ENCODE measurements at regions of chr21 and their contacts with region 1.

Region 1: DNA sequence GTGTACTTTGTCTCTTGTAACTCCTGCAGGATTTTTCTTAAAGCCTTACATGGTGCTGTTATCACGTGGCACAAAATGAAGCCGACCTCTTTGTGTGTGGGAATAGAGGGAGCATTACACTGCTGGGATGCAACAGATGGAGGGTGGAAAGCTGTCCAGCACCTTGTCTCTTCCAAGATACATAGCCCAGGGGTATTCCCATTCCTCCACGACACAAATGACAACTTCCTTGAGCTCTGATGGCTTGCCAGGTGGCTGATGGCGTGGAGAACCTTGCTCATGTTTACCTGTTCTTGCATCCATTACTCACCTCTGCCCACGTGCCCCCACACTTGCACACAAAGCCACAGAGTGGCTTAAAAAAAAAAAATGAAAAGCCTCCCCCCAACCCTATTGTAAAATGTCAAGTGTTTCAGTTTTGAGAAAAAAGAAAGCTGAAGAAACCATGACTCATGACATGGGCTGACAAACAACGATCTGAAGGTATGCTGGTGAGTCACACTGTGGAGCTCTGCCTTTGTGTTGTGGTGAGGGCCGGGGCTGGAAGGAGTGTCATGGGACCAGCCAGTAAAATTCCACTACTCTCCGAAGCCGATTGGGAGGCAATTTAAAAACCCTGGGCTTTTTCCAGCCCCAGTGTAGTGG is 32.0 kb upstream of the ATP5PO start:
- DNase-seq: peak; percentile 68 to 97 (median 80)
- ATAC-seq: peak; percentile 59
- H3K4me3 ChIP-seq: peak overlapping the region; percentile 36
- H3K4me3 Mint-ChIP-seq: peak overlapping the region; percentile 65
- H3K27ac ChIP-seq: peak overlapping the region; percentile 93 to 98
- H3K27ac Mint-ChIP-seq: peak overlapping the region; percentile 93
- H3K4me1 ChIP-seq: peaks cover 76% of the 10 kb centered on the region
- H3K4me1 Mint-ChIP-seq: peaks cover 75% of the 10 kb centered on the region
- H3K27me3 ChIP-seq: no peaks in the 10 kb centered on the region
- H3K27me3 Mint-ChIP-seq: no peaks in the 10 kb centered on the region
- CTCF ChIP-seq: no peak

Region 2: GRCh38 chr21:33894736-33895288 is 52.8 kb before region 1 on chr21:
- CTCF ChIA-PET with region 1: no interaction called
- POLR2A ChIA-PET with region 1: no interaction called
- intact Hi-C with region 1: no loop called
- DNase-seq: peak; percentile 27 to 76 (median 54)
- ATAC-seq: peak; percentile 100
- H3K4me3 ChIP-seq: peak overlapping the region; percentile 13
- H3K4me3 Mint-ChIP-seq: peak overlapping the region; percentile 82
- H3K27ac ChIP-seq: no peak overlapping the region
- H3K27ac Mint-ChIP-seq: peak overlapping the region; percentile 76
- H3K4me1 ChIP-seq: peaks cover 7% of the 10 kb centered on the region
- H3K4me1 Mint-ChIP-seq: peaks cover 11% of the 10 kb centered on the region
- H3K27me3 ChIP-seq: no peaks in the 10 kb centered on the region
- H3K27me3 Mint-ChIP-seq: no peaks in the 10 kb centered on the region
- CTCF ChIP-seq: peak; percentile 54

Region 3: DNA sequence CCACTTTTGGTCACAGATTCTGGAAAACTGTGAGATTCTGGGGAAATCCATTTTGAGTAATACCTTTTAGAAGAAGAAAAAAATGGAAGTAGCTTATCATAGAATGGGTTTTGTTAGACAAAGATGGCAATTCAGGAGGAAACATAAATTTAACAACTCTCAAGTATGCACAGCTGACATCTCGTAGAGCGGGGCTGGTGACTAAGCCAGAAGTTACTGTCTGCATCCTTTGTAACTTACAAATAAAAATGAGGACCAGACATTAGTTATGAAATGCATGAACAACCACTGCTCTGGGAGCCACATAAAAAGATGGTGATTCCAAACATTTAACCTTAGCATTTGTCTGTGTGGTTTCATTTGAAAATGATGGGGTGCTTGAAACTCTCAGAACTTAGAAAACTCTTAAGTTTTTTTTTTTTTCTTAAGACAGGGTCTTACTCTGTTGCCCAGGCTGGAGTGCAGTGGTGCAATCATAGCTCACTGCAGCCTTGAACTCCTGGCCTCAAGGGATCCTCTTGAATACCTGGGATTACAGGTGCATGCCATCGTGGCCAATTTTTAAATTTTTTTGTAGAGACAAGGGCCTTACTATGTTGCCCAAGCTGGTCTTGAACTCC is 17.2 kb after region 1 on chr21:
- CTCF ChIA-PET with region 1: interaction called, 3 read pairs
- POLR2A ChIA-PET with region 1: interaction called, 32 read pairs
- intact Hi-C with region 1: loop called in 1 of 2 experiments (anchors 2 kb)
- DNase-seq: no peak
- ATAC-seq: no peak
- H3K4me3 ChIP-seq: no peak overlapping the region
- H3K4me3 Mint-ChIP-seq: no peak overlapping the region
- H3K27ac ChIP-seq: no peak overlapping the region
- H3K27ac Mint-ChIP-seq: no peak overlapping the region
- H3K4me1 ChIP-seq: peaks cover 6% of the 10 kb centered on the region
- H3K4me1 Mint-ChIP-seq: peaks cover 33% of the 10 kb centered on the region
- H3K27me3 ChIP-seq: no peaks in the 10 kb centered on the region
- H3K27me3 Mint-ChIP-seq: no peaks in the 10 kb centered on the region
- CTCF ChIP-seq: no peak

Region 4: GRCh38 chr21:33998402-33998801 is 50.8 kb after region 1 on chr21:
- CTCF ChIA-PET with region 1: interaction called, 3 read pairs
- POLR2A ChIA-PET with region 1: interaction called, 3 read pairs
- intact Hi-C with region 1: loop called in 1 of 2 experiments (anchors 5 kb)
- DNase-seq: peak in 4 of 14 experiments; percentile 26 to 48 (median 32)
- ATAC-seq: peak; percentile 64
- H3K4me3 ChIP-seq: no peak overlapping the region
- H3K4me3 Mint-ChIP-seq: no peak overlapping the region
- H3K27ac ChIP-seq: no peak overlapping the region
- H3K27ac Mint-ChIP-seq: peak overlapping the region; percentile 62
- H3K4me1 ChIP-seq: peaks cover 13% of the 10 kb centered on the region
- H3K4me1 Mint-ChIP-seq: peaks cover 36% of the 10 kb centered on the region
- H3K27me3 ChIP-seq: no peaks in the 10 kb centered on the region
- H3K27me3 Mint-ChIP-seq: no peaks in the 10 kb centered on the region
- CTCF ChIP-seq: no peak

Region 5: DNA sequence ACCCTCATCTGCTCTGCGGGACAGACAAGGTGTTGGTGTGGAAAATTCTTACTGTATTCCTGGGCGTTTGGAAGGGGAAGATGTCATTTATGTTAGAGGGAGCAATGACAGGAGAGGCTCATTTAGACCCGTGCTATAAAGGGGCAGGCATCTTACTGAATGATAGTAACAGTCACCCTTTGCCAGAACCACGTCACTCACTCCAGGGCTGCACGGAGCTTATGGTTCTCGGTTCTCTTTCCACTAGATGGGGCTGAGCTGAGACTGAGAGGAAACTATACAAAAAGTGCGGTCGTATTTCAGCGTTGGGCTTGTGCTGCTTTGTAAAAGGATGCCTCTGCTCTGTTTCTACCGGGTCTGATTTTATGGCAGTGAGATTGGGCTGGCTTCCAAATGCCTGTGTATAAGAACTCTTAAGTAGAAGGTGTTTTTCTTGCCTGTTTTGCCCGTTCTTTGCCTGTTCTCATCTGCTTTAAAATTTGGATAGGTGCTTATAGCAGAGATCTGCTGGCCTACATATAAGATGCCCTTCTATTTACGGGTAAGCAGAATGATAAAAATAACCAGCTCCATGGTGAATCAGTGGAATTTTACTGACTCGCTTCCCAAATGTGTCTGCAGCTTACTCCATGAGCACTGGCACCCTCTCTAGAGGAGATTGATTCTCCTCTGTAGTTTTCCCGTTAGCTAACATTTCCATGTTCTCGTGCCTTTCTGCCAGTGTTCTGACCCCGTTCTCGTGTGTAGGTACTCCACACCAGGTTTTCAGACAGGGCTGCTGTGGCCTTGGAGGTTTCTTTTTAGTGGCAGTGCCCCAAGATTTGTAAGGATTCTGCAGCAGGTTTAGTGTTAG is 181.7 kb after region 1 on chr21:
- CTCF ChIA-PET with region 1: interaction called, 5 read pairs
- POLR2A ChIA-PET with region 1: interaction called, 8 read pairs
- intact Hi-C with region 1: loop called in 1 of 2 experiments (anchors 1 kb)
- DNase-seq: peak; percentile 31 to 86 (median 56)
- ATAC-seq: peak; percentile 89
- H3K4me3 ChIP-seq: peak overlapping the region; percentile 9
- H3K4me3 Mint-ChIP-seq: peak overlapping the region; percentile 71
- H3K27ac ChIP-seq: peak overlapping the region; percentile 31 to 54
- H3K27ac Mint-ChIP-seq: peak overlapping the region; percentile 91
- H3K4me1 ChIP-seq: peaks cover 62% of the 10 kb centered on the region
- H3K4me1 Mint-ChIP-seq: peaks cover 94% of the 10 kb centered on the region
- H3K27me3 ChIP-seq: no peaks in the 10 kb centered on the region
- H3K27me3 Mint-ChIP-seq: no peaks in the 10 kb centered on the region
- CTCF ChIP-seq: peak; percentile 40

Measured in CD4-positive, alpha-beta T cell (primary cell).